Gastrocnemius medialis (tissue), 4 donors: ENCODE measurements at regions of chr7 and their contacts with region 1.

Region 1: DNA sequence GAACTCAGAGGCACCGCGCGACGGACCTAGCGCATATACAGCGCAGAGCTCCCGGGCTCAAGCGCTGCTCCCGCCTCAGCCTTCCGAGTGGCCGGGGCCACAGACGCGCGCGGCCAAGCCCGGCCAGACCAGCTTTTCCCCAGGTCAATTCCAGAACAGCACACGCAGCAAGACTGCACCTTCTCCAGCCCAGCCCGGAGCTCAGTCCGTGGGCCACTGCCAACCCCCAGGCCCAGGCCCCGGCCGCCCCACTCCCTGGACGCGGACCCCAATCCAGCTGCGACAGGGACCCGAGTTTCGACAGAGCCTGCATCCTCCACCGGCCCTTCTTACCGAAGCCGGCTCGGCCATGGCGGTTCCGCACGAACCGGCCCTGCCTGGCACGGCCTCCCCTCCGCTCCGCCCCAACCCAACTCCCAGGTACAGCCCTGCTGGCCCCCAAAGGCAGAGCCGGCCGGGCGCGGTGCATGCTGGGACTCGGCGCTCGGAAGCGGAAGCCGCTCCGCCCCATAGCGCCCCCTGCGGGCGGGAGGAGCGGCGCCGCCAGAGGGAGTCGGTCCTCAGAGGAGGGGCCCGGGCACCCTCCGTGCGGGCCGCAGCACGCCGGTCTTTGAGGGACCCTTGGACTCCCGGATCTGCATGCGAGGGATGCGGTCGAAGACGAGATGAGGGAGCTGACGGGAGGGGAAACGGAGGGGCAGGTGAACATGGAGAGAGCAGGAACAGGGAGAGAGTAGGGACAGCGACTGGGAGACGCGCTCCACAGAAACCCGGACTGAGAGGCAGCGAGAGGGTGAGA is at the start of gene ZNF425:
- DNase-seq: peak; percentile 80 to 85
- ATAC-seq: peak; percentile 92 to 93
- H3K4me3 ChIP-seq: peak within 1 kb of the TSS; percentile 79 to 100 (median 96)
- H3K27ac ChIP-seq: peak within 1 kb of the TSS; percentile 94 to 98 (median 96)
- H3K4me1 ChIP-seq: peaks cover 9% of the 10 kb centered on the region in 2 donors
- H3K27me3 ChIP-seq: no peaks in the 10 kb centered on the region
- CTCF ChIP-seq: peak; percentile 96 to 99 (median 97)
- POLR2A ChIP-seq: peak; percentile 84 to 91
- total RNA-seq, gene ZNF425: 1.2 to 3.2 (median 1.5) TPM

Region 2: GRCh38 chr7:148687555-148687954 is 438.5 kb before region 1 on chr7:
- in situ Hi-C with region 1: no loop called
- intact Hi-C with region 1: no loop called
- DNase-seq: no peak
- ATAC-seq: no peak
- H3K4me3 ChIP-seq: no peak overlapping the region
- H3K27ac ChIP-seq: no peak overlapping the region
- H3K4me1 ChIP-seq: no peaks in the 10 kb centered on the region
- H3K27me3 ChIP-seq: no peaks in the 10 kb centered on the region
- CTCF ChIP-seq: no peak
- POLR2A ChIP-seq: no peak

Region 3: DNA sequence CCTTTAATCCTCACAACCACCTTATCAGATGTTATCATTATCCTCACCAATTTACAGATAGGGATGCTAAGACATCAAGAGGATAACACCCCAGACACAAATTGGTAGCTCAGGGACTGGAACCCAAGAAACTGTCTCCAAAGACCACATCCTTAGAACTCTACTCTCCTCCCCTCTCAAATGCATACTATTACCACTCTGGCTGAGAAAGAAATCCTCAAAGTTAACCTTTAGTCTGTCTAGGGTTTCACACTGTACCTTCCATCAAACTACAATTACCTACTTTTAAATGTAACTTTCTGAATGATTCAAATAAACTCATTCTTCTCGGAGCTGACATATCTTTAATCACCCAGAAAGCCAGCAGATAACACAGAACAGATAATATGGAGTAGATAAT is 248.5 kb before region 1 on chr7:
- in situ Hi-C with region 1: no loop called
- intact Hi-C with region 1: no loop called
- DNase-seq: no peak
- ATAC-seq: no peak
- H3K4me3 ChIP-seq: no peak overlapping the region
- H3K27ac ChIP-seq: no peak overlapping the region
- H3K4me1 ChIP-seq: peaks cover under 1 to 2% of the 10 kb centered on the region in 2 donors
- H3K27me3 ChIP-seq: peaks cover 0 to 3% (median 0%) of the 10 kb centered on the region in 3 donors
- CTCF ChIP-seq: no peak
- POLR2A ChIP-seq: no peak

Region 4: DNA sequence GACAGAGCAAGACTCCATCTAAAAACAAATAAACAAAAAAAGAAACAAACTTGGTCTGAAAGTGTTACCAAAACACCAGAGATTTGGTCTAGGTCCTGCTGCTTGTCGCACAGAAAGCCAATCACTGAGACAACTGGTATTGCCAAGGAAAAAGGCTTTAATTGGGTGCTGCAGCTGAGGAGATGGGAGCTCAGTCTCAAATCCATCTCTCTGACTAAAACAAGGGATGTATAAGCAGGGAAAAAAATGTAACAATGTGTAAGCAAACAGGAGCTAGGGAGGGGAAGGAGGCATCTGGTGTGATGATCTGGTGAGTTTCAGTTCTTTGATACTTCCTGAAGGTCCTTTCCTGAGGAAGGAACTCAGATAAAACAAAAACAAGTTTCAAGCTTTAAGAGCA is 89.4 kb before region 1 on chr7:
- in situ Hi-C with region 1: no loop called
- intact Hi-C with region 1: no loop called
- DNase-seq: no peak
- ATAC-seq: no peak
- H3K4me3 ChIP-seq: no peak overlapping the region
- H3K27ac ChIP-seq: no peak overlapping the region
- H3K4me1 ChIP-seq: no peaks in the 10 kb centered on the region
- H3K27me3 ChIP-seq: no peaks in the 10 kb centered on the region
- CTCF ChIP-seq: no peak
- POLR2A ChIP-seq: no peak

Region 5: DNA sequence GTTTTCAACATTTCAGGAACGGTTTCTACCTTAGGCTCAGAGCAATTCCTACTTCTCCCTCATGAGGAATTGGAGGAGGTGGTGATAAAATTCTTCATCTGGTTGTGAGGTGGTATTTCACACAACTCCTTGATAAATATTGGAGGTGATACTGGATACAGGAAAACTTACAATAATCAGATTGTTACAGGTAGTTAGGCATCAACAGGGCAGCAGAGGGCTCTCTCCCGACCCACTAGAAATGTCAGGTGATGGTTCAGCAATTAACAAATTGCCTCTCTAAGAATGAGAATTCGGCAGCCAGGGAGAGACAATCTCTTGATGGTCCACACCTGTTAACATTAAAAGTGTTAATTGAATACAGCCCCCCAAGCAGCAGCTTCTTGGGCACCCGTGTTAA is 58.2 kb before region 1 on chr7:
- in situ Hi-C with region 1: no loop called
- intact Hi-C with region 1: loop called (anchors 2 kb)
- DNase-seq: no peak
- ATAC-seq: no peak
- H3K4me3 ChIP-seq: no peak overlapping the region
- H3K27ac ChIP-seq: no peak overlapping the region
- H3K4me1 ChIP-seq: no peaks in the 10 kb centered on the region
- H3K27me3 ChIP-seq: no peaks in the 10 kb centered on the region
- CTCF ChIP-seq: no peak
- POLR2A ChIP-seq: no peak

Region 6: DNA sequence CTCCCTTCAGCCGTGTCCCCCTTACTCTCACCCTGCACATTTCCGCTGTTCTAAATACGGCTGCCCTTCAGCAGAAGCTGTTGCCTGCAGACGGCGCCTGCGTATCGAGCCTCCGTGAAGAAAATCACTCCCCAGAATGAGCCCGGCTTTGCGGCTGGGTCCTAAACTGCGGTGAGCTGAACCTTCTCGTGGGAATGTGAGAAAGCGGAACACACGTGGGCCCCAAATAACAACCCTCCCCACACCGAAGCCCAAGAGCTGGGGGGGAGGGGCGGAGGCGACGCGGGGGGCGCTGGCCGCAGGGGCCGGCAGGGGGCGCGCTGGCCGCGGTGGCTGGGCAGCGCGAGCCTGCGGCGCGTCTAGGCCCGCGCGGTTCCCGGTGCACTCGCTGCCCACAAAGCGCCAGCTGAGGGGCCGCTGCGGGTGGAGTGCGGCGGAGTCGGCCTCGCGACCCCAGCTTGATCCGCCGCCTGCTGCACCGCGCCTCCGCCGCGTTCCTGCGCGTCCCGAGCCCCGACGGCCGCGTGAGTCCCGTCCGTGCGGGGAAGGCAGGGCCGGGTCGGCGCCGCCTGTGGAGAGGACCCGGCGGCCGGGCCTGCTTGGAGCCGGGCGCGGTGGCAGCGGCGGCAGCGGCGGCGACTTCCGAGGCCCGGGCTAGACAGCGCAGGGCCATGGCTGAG is 21.1 kb after region 1 on chr7 and contains the start of gene ZNF398:
- in situ Hi-C with region 1: no loop called
- intact Hi-C with region 1: loop called (anchors 1 kb)
- DNase-seq: peak; percentile 54 to 58
- ATAC-seq: peak; percentile 87 to 92
- H3K4me3 ChIP-seq: peak within 1 kb of the TSS; percentile 76 to 98 (median 94)
- H3K27ac ChIP-seq: peak within 1 kb of the TSS; percentile 85 to 96 (median 92)
- H3K4me1 ChIP-seq: peaks cover 6 to 13% of the 10 kb centered on the region in 2 donors
- H3K27me3 ChIP-seq: no peaks in the 10 kb centered on the region
- CTCF ChIP-seq: peak; percentile 65 to 98 (median 82)
- POLR2A ChIP-seq: peak; percentile 50 to 68
- total RNA-seq, gene ZNF398: 12.8 to 19.9 (median 15.0) TPM